ENCODE measurements at regions of chr5 and their contacts with region 1.

Region 1: DNA sequence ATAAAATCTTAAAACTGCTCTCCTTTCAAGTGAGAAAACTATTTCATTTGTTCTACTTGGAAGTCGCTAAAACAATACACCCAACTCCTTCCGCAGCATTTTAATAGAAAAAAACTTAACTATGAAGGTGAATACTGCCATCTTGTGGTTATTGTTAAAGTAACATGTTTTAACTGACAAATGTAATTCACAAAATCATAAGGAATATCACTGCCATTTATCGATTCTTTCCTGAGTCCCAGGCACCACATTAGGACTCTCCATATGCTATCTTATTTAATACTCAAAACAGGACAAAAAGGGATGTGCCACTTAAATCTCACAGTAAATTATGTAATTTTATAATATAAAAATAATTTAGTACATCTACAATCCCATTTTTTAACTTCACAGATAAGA is 130.5 kb upstream of the ITGA1 start:
- DNase-seq: peak; percentile 23
- H3K4me3 ChIP-seq: no peak overlapping the region
- H3K27ac ChIP-seq: no peak overlapping the region
- H3K4me1 ChIP-seq: no peaks in the 10 kb centered on the region
- H3K27me3 ChIP-seq: no peaks in the 10 kb centered on the region
- CTCF ChIP-seq: peak; percentile 41 to 45

Region 2: GRCh38 chr5:52007230-52007858 is 649.9 kb before region 1 on chr5:
- CTCF ChIA-PET with region 1: no interaction called
- dilution Hi-C with region 1: no loop called
- in situ Hi-C with region 1: no loop called
- intact Hi-C with region 1: loop called (anchors 5 kb)
- DNase-seq: peak; percentile 33
- H3K4me3 ChIP-seq: no peak overlapping the region
- H3K27ac ChIP-seq: no peak overlapping the region
- H3K4me1 ChIP-seq: no peaks in the 10 kb centered on the region
- H3K27me3 ChIP-seq: peaks cover 3% of the 10 kb centered on the region
- CTCF ChIP-seq: peak; percentile 83 to 87

Region 3: GRCh38 chr5:52356311-52356918 is 300.8 kb before region 1 on chr5:
- CTCF ChIA-PET with region 1: no interaction called
- dilution Hi-C with region 1: no loop called
- in situ Hi-C with region 1: no loop called
- intact Hi-C with region 1: loop called (anchors 5 kb)
- DNase-seq: no peak
- H3K4me3 ChIP-seq: no peak overlapping the region
- H3K27ac ChIP-seq: no peak overlapping the region
- H3K4me1 ChIP-seq: no peaks in the 10 kb centered on the region
- H3K27me3 ChIP-seq: no peaks in the 10 kb centered on the region
- CTCF ChIP-seq: peak; percentile 72 to 84

Region 4: DNA sequence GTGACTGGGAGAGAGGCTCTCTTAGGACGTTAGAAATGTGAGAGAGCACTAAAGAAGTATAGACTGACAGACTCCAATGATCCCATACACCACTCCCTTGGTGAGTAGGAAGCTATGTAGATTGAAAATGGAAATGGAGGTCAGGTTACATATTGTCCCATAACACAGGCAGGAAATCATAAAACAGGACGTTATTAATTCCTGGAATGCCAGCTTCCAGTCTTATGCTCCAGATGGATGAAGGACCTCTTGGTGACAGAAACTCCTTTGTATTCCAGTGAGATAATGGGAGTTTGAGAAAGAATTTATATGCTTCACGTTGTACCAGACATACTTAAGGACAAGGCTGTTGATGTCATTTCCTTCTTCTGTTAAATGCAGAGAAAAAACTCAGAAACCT is 207.7 kb before region 1 on chr5:
- CTCF ChIA-PET with region 1: no interaction called
- dilution Hi-C with region 1: no loop called
- in situ Hi-C with region 1: no loop called
- intact Hi-C with region 1: no loop called
- DNase-seq: no peak
- H3K4me3 ChIP-seq: no peak overlapping the region
- H3K27ac ChIP-seq: no peak overlapping the region
- H3K4me1 ChIP-seq: no peaks in the 10 kb centered on the region
- H3K27me3 ChIP-seq: no peaks in the 10 kb centered on the region
- CTCF ChIP-seq: no peak

Region 5: GRCh38 chr5:52725065-52725746 is 68.0 kb after region 1 on chr5:
- CTCF ChIA-PET with region 1: no interaction called
- dilution Hi-C with region 1: no loop called
- in situ Hi-C with region 1: no loop called
- intact Hi-C with region 1: no loop called
- DNase-seq: peak; percentile 95
- H3K4me3 ChIP-seq: no peak overlapping the region
- H3K27ac ChIP-seq: peak overlapping the region; percentile 51
- H3K4me1 ChIP-seq: peaks cover 38% of the 10 kb centered on the region
- H3K27me3 ChIP-seq: no peaks in the 10 kb centered on the region
- CTCF ChIP-seq: no peak

Region 6: GRCh38 chr5:52776116-52776515 is 118.9 kb after region 1 on chr5:
- CTCF ChIA-PET with region 1: interaction called, 10 read pairs
- dilution Hi-C with region 1: no loop called
- in situ Hi-C with region 1: no loop called
- intact Hi-C with region 1: no loop called
- DNase-seq: no peak
- H3K4me3 ChIP-seq: no peak overlapping the region
- H3K27ac ChIP-seq: no peak overlapping the region
- H3K4me1 ChIP-seq: no peaks in the 10 kb centered on the region
- H3K27me3 ChIP-seq: no peaks in the 10 kb centered on the region
- CTCF ChIP-seq: no peak